IMR-90 (cell line): ENCODE measurements at regions of chr16 and their contacts with region 1.

Region 1: GRCh38 chr16:30984669-30985400 is at the start of gene HSD3B7:
- DNase-seq: peak; percentile 68
- ATAC-seq: peak; percentile 94
- H3K4me3 ChIP-seq: peak within 1 kb of the TSS; percentile 47
- H3K27ac ChIP-seq: peak within 1 kb of the TSS; percentile 40
- H3K4me1 ChIP-seq: peaks cover 8% of the 10 kb centered on the region
- H3K27me3 ChIP-seq: no peaks in the 10 kb centered on the region
- CTCF ChIP-seq: peak; percentile 91
- POLR2A ChIP-seq: peak; percentile 36; the same call in 1 of the 2 replicates
- RAD21 ChIP-seq: peak; percentile 89
- total RNA-seq, gene HSD3B7: 9.4 and 11.3 TPM in 2 replicates

Region 2: DNA sequence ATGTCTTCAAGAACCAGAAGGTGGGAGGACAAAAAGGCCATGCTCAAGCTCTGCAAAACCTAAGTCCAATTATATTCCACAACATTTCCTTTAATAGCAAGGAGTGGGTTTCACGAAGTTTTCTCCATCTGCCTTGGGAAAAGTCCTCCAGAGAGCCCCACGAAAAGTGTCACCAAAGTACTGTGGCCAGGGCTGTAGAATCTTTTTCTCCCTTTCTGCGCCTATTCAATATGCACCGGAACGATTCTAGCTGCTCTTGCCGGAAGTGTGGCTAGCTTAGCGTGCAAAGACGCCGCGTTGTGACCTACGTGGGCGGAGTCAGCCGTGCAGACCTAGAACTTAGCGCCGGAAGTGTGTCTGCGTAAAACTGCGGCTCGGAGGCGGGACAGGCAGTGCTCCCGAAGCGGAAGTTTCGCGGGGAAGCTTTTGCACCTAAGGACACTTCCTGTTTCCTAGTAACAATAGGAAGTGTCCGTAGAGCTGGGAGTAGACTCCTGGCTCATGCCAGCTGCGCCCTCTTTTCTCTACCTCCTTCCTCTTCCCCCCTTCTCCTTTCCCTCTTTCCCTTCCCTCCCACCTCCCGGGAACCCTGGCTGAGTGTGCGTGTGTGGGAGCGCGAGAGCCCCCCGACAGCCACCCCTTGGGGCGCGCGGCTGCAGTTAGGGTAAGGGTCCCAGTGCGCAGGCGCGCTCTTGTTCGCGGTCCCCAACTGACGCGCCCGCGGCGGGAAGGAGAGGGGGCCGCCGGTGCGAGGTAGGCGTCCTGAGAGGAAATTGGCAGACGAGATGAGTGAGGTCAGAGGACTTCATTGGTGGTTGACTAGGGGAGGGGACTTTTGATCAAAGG is 89.4 kb after region 1 on chr16 and contains the starts of genes ZNF646 and ZNF668:
- CTCF ChIA-PET with region 1: no interaction called
- POLR2A ChIA-PET with region 1: interaction called, 6 read pairs
- dilution Hi-C with region 1: no loop called
- in situ Hi-C with region 1: no loop called
- intact Hi-C with region 1: loop called (anchors 1 kb)
- DNase-seq: peak; percentile 100
- ATAC-seq: peak; percentile 76
- H3K4me3 ChIP-seq: peak within 1 kb of the TSS; percentile 81
- H3K27ac ChIP-seq: peak within 1 kb of the TSS; percentile 90
- H3K4me1 ChIP-seq: peaks cover 6% of the 10 kb centered on the region
- H3K27me3 ChIP-seq: no peaks in the 10 kb centered on the region
- CTCF ChIP-seq: no peak
- POLR2A ChIP-seq: peak; percentile 72
- RAD21 ChIP-seq: no peak; the same call in 1 of the 2 replicates
- total RNA-seq, gene ZNF646: 6.8 and 6.9 TPM in 2 replicates
- total RNA-seq, gene ZNF668: 4.5 and 5.3 TPM in 2 replicates

Region 3: DNA sequence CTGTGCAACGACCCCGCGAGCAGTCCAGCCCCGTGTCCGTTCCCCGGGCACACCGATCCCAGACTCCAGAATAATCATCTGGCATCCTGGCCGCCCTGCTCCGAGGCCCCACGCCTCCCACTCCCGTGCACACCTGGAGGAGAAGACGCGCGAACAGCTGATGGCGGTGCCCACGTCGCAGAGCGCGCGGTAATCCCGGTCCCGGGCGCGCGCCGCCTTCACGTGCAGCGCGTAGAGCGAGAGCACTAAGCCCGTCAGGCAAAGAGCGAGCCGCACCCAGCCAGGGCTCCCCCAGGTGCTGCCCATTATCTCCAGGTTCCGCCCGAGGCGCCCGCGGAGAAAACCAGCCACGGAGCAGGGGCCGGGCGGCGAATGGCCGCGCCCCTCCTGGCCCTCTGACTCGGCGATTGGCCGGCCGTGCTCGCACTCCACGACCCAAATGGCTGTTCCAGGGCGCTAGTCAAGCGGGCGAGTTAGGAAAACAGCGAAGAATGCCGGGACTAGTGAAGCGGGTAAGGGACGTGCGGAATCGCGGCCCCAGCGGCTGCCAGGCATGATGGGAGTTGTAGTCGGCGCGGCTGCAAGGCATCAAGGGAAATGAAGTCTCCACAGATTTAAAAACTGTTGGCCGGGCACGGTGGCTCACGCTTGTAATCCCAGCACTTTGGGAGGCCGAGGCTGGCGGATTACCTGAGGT is 109.7 kb after region 1 on chr16 and contains the start of gene VKORC1:
- CTCF ChIA-PET with region 1: no interaction called
- POLR2A ChIA-PET with region 1: no interaction called
- dilution Hi-C with region 1: no loop called
- in situ Hi-C with region 1: loop called (anchors 10 kb)
- intact Hi-C with region 1: loop called (anchors 2 kb)
- DNase-seq: peak; percentile 97
- ATAC-seq: peak; percentile 96
- H3K4me3 ChIP-seq: peak within 1 kb of the TSS; percentile 91
- H3K27ac ChIP-seq: peak within 1 kb of the TSS; percentile 63
- H3K4me1 ChIP-seq: peaks cover 3% of the 10 kb centered on the region
- H3K27me3 ChIP-seq: no peaks in the 10 kb centered on the region
- CTCF ChIP-seq: no peak
- POLR2A ChIP-seq: no peak
- RAD21 ChIP-seq: no peak
- total RNA-seq, gene VKORC1: 61.9 and 65.2 TPM in 2 replicates

Region 4: GRCh38 chr16:31713071-31713944 is 728.5 kb after region 1 on chr16:
- CTCF ChIA-PET with region 1: no interaction called
- POLR2A ChIA-PET with region 1: no interaction called
- dilution Hi-C with region 1: no loop called
- in situ Hi-C with region 1: loop called (anchors 25 kb)
- intact Hi-C with region 1: no loop called
- DNase-seq: peak; percentile 91
- ATAC-seq: peak; percentile 96
- H3K4me3 ChIP-seq: peak overlapping the region; percentile 66
- H3K27ac ChIP-seq: peak overlapping the region; percentile 70
- H3K4me1 ChIP-seq: peaks cover 6% of the 10 kb centered on the region
- H3K27me3 ChIP-seq: no peaks in the 10 kb centered on the region
- CTCF ChIP-seq: no peak
- POLR2A ChIP-seq: peak; percentile 98
- RAD21 ChIP-seq: no peak